IMR-90 (cell line): ENCODE measurements at regions of chr16 and their contacts with region 1.

Region 1: GRCh38 chr16:29926005-29926710 is at the start of gene KCTD13:
- DNase-seq: peak; percentile 73
- ATAC-seq: peak; percentile 97
- H3K4me3 ChIP-seq: peak within 1 kb of the TSS; percentile 79
- H3K27ac ChIP-seq: peak within 1 kb of the TSS; percentile 92
- H3K4me1 ChIP-seq: peaks cover 10% of the 10 kb centered on the region
- H3K27me3 ChIP-seq: no peaks in the 10 kb centered on the region
- CTCF ChIP-seq: no peak
- POLR2A ChIP-seq: peak; percentile 67
- RAD21 ChIP-seq: no peak; the same call in 1 of the 2 replicates
- total RNA-seq, gene KCTD13: 3.1 and 4.1 TPM in 2 replicates

Region 2: DNA sequence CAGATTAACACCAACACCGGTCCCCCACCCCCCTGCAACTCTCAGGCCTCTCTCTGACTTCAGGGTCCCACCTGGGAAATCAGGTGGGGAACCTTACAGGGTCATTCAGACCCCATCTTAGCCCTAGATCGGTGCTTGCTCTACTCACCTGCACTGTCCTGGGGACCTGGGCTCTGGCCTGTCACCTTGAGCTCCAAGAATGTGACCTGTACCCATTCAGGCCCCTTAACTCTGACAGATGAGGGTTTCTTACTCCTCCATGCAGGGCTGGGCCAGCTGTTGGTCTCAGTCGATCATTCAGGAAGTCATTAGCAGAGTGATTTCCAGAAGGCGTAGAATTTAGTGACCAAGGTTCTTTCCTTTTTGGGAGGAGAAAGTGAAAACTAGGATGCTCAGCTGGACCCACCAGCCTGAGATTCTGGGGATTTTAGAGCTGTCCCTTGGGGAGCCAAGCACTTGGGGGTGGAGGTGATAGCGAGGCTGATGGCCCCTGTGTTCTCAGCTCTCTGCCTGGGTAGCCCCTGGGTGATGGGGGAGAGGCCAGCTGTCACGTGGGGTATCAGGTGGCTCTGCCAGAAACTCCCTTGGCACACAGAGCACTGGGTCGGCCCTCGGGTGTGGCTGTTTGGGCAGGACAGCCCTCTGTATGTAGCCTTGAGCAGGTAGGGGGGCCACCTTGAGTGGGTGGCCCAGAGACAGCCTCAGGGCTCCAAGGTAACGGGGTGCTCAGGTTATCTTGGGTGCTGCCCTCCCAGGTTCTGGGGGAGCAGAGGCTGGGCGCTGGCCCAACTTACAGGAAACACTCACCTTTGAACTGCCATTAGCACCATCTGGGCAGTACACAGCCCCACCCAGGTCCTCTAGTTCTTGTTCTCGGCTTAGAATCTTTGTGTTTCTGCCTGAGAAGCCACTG is 105.2 kb before region 1 on chr16:
- CTCF ChIA-PET with region 1: no interaction called
- POLR2A ChIA-PET with region 1: no interaction called
- dilution Hi-C with region 1: no loop called
- in situ Hi-C with region 1: no loop called
- intact Hi-C with region 1: no loop called
- DNase-seq: no peak
- ATAC-seq: no peak
- H3K4me3 ChIP-seq: peak overlapping the region; percentile 85
- H3K27ac ChIP-seq: peak overlapping the region; percentile 88
- H3K4me1 ChIP-seq: peaks cover 27% of the 10 kb centered on the region
- H3K27me3 ChIP-seq: no peaks in the 10 kb centered on the region
- CTCF ChIP-seq: no peak
- POLR2A ChIP-seq: no peak
- RAD21 ChIP-seq: no peak

Region 3: GRCh38 chr16:29868396-29869009 is 57.7 kb before region 1 on chr16:
- CTCF ChIA-PET with region 1: no interaction called
- POLR2A ChIA-PET with region 1: no interaction called
- dilution Hi-C with region 1: no loop called
- in situ Hi-C with region 1: no loop called
- intact Hi-C with region 1: no loop called
- DNase-seq: no peak
- ATAC-seq: no peak
- H3K4me3 ChIP-seq: no peak overlapping the region
- H3K27ac ChIP-seq: no peak overlapping the region
- H3K4me1 ChIP-seq: no peaks in the 10 kb centered on the region
- H3K27me3 ChIP-seq: no peaks in the 10 kb centered on the region
- CTCF ChIP-seq: no peak
- POLR2A ChIP-seq: no peak
- RAD21 ChIP-seq: no peak

Region 4: GRCh38 chr16:29943846-29944669 is 17.9 kb after region 1 on chr16:
- CTCF ChIA-PET with region 1: no interaction called
- POLR2A ChIA-PET with region 1: no interaction called
- dilution Hi-C with region 1: no loop called
- in situ Hi-C with region 1: no loop called
- intact Hi-C with region 1: no loop called
- DNase-seq: peak; percentile 99
- ATAC-seq: peak; percentile 99
- H3K4me3 ChIP-seq: no peak overlapping the region
- H3K27ac ChIP-seq: peak overlapping the region; percentile 82
- H3K4me1 ChIP-seq: peaks cover 4% of the 10 kb centered on the region
- H3K27me3 ChIP-seq: no peaks in the 10 kb centered on the region
- CTCF ChIP-seq: peak; percentile 56
- POLR2A ChIP-seq: peak; percentile 75
- RAD21 ChIP-seq: peak; percentile 52

Region 5: DNA sequence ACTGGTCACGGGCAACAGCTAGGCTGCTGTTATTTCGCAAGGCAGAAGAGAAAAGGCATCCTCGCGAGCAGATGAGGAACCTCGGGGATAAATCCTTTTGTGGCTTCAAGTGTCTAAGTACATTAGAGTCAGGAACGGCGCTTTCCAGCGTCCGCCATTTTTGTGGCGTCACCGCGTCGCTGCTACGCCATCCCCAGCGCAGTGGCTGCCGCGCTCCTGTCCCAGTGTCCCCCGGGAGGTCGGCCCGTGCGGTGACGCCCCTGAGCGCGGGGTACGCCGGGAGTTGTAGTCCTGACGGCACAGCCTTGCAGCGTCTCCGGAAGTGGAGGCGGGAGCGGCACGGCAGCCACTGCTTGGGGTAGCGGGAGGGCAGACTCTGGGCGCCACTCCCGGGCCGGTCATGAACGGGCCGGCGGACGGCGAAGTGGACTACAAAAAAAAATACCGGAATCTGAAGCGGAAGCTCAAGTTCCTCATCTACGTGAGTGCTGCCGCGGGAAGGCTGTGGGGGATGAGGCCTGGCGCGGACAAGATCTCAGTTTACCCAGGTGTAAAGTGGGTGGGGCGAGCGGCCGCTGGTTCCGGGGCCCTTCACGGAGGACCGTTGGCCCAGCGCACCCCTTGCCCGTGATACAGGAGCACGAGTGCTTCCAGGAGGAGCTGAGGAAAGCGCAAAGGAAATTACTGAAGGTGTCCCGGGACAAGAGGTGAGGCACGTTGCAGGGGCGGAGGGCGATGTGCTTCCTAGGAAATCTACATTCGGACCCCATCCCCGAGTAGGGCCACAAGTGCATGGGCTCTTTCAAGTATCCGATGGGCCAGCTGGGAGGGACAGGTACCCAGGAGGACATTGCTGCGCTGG is 70.0 kb after region 1 on chr16 and contains the start of gene INO80E:
- CTCF ChIA-PET with region 1: no interaction called
- POLR2A ChIA-PET with region 1: no interaction called
- dilution Hi-C with region 1: no loop called
- in situ Hi-C with region 1: no loop called
- intact Hi-C with region 1: loop called (anchors 5 kb)
- DNase-seq: peak; percentile 93
- ATAC-seq: peak; percentile 98
- H3K4me3 ChIP-seq: peak within 1 kb of the TSS; percentile 65
- H3K27ac ChIP-seq: peak within 1 kb of the TSS; percentile 79
- H3K4me1 ChIP-seq: peaks cover 8% of the 10 kb centered on the region
- H3K27me3 ChIP-seq: no peaks in the 10 kb centered on the region
- CTCF ChIP-seq: no peak
- POLR2A ChIP-seq: peak; percentile 69
- RAD21 ChIP-seq: peak; percentile 1; the same call in 1 of the 2 replicates
- total RNA-seq, gene INO80E: 42.1 and 42.8 TPM in 2 replicates

Region 6: DNA sequence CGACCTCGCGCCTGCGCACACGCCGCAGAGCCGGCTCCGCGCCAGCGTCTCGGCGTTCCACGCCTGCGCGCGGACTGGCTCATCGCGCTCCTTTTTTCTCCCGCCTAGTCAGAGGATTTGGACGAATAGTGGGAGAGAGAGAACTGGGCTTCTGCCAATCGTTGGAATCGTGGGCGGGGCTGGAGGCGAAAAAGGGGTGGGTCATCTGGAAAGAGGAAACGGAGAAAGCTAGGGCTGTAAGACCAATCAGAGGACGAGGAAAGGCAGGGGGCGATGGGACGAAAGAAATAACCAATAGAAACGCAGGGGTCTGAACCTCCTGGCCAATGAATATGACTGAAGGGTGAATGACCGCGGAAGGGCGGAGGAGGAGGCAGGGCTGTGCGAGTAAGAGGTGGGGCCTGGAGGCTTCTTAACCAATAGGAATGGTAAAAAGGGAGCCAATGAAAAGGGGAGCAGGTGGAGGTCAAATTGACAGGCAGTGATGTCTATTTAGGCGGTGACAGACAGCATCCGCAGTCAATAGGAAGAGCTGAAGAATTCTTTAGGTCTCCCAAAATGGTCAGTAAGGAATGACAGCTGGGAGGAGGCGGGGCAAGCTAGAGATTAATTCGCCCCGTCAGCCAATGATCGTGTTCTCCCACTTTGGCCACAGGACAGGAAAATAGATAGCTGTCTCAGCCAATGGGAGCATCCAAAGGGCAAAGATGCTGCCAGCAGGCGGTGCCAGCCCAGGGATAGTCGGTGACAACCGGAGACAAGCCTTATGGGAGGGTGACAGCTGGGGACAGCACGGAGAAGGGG is 444.5 kb after region 1 on chr16 and contains the start of gene TBC1D10B:
- CTCF ChIA-PET with region 1: no interaction called
- POLR2A ChIA-PET with region 1: no interaction called
- dilution Hi-C with region 1: no loop called
- in situ Hi-C with region 1: no loop called
- intact Hi-C with region 1: no loop called
- DNase-seq: peak; percentile 100
- ATAC-seq: peak; percentile 86
- H3K4me3 ChIP-seq: peak within 1 kb of the TSS; percentile 86
- H3K27ac ChIP-seq: peak within 1 kb of the TSS; percentile 82
- H3K4me1 ChIP-seq: peaks cover 3% of the 10 kb centered on the region; the same call in 1 of the 2 replicates
- H3K27me3 ChIP-seq: no peaks in the 10 kb centered on the region
- CTCF ChIP-seq: peak; percentile 31
- POLR2A ChIP-seq: no peak
- RAD21 ChIP-seq: no peak
- total RNA-seq, gene TBC1D10B: 8.1 and 8.4 TPM in 2 replicates